ENCODE measurements at regions of chr15 and their contacts with region 1.

Region 1: DNA sequence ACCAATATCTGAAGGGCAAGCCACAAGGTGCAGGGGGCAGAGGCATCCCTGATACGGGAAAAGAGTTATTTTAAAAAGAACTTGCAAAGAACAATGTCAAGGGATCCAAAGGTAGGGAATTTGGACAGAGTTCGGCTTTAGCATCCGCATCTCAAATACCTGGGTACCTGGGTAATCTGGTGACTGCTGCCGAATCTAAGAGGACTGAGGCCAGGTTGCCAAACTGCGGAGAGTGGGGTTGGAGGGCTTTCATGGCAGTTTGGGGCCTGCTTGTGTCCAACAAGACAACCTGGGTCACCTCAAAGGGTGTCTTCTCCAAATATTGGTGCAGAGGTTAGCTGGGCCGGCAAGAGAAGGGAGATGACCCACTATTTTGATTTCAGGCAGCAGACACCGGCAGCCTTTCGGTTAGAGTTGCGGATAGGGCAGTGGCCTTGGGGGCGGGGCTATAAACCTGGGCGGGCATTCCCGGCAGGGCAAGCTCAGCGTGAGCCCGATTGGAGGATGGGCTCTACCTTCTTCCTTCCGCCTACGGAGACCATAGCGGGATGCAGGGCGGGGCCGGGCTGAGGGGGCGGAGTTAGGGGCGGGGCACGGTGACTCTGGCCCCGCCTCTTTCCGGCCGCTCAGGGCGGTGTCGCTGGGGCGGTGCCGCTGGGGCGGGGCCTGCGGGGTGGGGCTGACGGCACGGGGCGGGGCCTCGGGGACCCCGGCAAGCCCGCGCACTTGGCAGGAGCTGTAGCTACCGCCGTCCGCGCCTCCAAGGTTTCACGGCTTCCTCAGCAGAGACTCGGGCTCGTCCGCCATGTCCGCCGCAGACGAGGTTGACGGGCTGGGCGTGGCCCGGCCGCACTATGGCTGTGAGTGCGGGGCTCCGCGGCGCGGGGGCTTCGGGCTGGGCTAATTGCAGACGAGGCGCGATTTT is at the start of gene IQGAP1:
- DNase-seq: peak; percentile 99
- ATAC-seq: peak; percentile 94
- H3K4me3 Mint-ChIP-seq: peak within 1 kb of the TSS; percentile 88
- H3K27ac Mint-ChIP-seq: peak within 1 kb of the TSS; percentile 94
- H3K4me1 Mint-ChIP-seq: peaks cover 37% of the 10 kb centered on the region
- H3K27me3 Mint-ChIP-seq: no peaks in the 10 kb centered on the region
- CTCF ChIP-seq: no peak
- total RNA-seq, gene IQGAP1: 148 to 155 TPM

Region 2: GRCh38 chr15:90376789-90377188 is 11.0 kb before region 1 on chr15:
- CTCF ChIA-PET with region 1: interaction called, 7 read pairs
- POLR2A ChIA-PET with region 1: interaction called, 19 read pairs
- intact Hi-C with region 1: no loop called
- DNase-seq: peak; percentile 78
- ATAC-seq: peak; percentile 89
- H3K4me3 Mint-ChIP-seq: peak overlapping the region; percentile 16
- H3K27ac Mint-ChIP-seq: peak overlapping the region; percentile 96
- H3K4me1 Mint-ChIP-seq: peaks cover 38% of the 10 kb centered on the region
- H3K27me3 Mint-ChIP-seq: no peaks in the 10 kb centered on the region
- CTCF ChIP-seq: no peak

Region 3: GRCh38 chr15:90400406-90401314 is 12.9 kb after region 1 on chr15:
- CTCF ChIA-PET with region 1: interaction called, 6 read pairs
- POLR2A ChIA-PET with region 1: interaction called, 15 read pairs
- intact Hi-C with region 1: loop called (anchors 2 kb)
- DNase-seq: peak; percentile 73
- ATAC-seq: peak; percentile 98
- H3K4me3 Mint-ChIP-seq: peak overlapping the region; percentile 44
- H3K27ac Mint-ChIP-seq: peak overlapping the region; percentile 95
- H3K4me1 Mint-ChIP-seq: peaks cover 60% of the 10 kb centered on the region
- H3K27me3 Mint-ChIP-seq: no peaks in the 10 kb centered on the region
- CTCF ChIP-seq: no peak

Region 4: GRCh38 chr15:90407871-90408317 is 20.1 kb after region 1 on chr15:
- CTCF ChIA-PET with region 1: interaction called, 3 read pairs
- POLR2A ChIA-PET with region 1: interaction called, 15 read pairs
- intact Hi-C with region 1: loop called (anchors 2 kb)
- DNase-seq: peak; percentile 62
- ATAC-seq: peak; percentile 93
- H3K4me3 Mint-ChIP-seq: peak overlapping the region; percentile 50
- H3K27ac Mint-ChIP-seq: peak overlapping the region; percentile 89
- H3K4me1 Mint-ChIP-seq: peaks cover 76% of the 10 kb centered on the region
- H3K27me3 Mint-ChIP-seq: no peaks in the 10 kb centered on the region
- CTCF ChIP-seq: no peak

Region 5: GRCh38 chr15:90419738-90420406 is 32.1 kb after region 1 on chr15:
- CTCF ChIA-PET with region 1: no interaction called
- POLR2A ChIA-PET with region 1: interaction called, 11 read pairs
- intact Hi-C with region 1: no loop called
- DNase-seq: peak; percentile 75
- ATAC-seq: peak; percentile 96
- H3K4me3 Mint-ChIP-seq: peak overlapping the region; percentile 50
- H3K27ac Mint-ChIP-seq: peak overlapping the region; percentile 95
- H3K4me1 Mint-ChIP-seq: peaks cover 74% of the 10 kb centered on the region
- H3K27me3 Mint-ChIP-seq: no peaks in the 10 kb centered on the region
- CTCF ChIP-seq: no peak